Head of caudate nucleus (tissue), 42 donors: ENCODE measurements at regions of chr2 and their contacts with region 1.

Region 1: DNA sequence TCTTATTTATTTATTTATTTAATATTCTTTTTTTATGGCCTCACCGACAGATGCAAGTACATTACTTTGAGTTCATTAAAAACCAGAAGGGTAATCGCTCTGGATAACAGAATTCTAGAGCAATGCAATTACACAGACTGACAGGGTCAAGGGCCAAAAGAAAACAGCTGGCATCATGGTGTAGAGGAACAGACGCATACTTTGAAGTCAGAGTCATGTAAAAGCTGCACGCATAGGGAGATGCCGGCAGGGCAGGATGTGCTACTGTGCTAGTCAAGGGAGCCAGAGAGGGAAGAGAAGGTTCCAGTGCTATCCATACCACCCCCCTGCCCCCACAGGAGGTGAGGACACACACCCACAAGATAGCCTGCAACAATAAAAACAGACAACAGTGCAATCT is 115.2 kb upstream of the TFCP2L1 start:
- DNase-seq: no peak

Region 2: DNA sequence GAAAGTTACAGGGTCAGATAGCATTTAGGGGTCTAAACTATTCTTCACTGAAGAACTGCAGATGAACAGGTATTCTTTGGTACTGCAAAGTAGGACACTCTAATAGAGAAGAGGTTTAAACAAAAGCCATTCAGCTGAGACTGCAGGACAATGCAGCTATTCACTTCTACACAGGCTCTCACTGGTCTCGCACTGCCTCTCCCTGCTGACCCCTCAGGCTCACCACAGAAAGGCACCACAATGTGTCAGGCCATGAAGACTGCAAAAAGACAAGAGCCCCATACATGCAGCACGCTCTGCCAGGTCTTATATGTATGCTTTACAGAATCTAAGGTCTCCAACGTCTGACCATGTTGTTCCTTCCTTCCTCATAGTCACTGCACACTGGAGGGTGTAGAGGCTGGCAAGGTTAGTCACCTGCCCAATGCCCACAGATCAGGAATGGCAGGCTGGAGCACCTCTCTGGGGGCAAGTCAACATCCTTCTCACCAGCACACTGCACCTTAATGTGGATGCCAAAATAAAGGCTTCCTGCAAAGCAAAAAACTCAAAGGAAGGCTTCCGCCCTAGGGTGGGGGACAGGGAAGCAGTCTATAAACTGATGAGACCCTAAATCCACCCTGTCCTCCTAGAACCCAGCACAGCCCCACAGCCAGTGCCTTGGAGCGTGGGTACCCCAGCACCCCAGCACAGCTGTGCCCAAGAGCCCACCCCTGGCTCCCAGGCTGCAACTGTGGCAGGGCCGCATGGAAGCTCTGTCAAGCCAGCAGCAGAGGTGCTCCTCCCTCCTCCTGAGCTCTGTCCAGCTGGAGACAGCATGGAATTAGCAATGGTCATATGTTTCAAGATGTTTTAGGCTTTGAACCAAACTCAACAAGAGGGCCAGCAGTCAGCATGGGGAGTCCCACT is 119.8 kb after region 1 on chr2:
- intact Hi-C with region 1: loop called (anchors 10 kb)
- DNase-seq: peak; percentile 22 to 89 (median 74)

Region 3: DNA sequence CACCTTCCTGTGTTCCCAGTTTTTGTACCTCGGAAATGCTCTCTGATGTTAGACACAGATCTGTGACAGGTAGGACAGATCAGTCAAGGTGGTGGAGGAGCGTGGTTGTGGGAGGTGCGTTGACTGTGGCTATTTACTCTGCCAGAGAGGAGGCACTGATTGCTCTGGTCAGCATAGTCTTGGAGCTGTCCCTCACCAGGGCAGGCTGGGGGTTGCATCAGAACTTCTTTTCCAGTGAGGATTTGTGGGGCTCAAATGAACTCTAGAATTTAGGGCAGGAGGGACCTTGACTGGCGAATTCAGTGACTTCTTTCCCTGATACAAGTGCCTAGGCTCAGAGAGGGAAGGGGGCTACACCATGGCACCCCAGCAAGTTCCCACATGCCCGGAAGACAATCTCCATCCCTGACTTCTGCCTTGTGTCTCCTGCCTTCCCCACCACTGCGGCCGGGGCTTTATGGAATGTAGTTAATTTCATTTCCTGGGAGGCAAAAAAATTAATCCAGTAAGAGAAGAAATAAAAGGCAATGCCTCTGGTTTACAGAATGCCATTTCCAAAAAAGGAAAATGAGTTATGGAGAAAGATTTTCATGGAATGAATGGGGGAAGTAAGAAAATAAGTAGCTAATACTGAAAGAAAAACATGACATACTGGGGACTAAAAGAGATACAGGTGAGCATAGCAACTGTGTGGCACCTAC is 310.4 kb after region 1 on chr2:
- intact Hi-C with region 1: loop called (anchors 10 kb)
- DNase-seq: no peak